Cardiac septum (tissue), 1 donor: ENCODE measurements at regions of chr16 and their contacts with region 1.

Region 1: GRCh38 chr16:27179500-27180072 is 23.7 kb upstream of the KDM8 start:
- DNase-seq: peak; percentile 91

Region 2: GRCh38 chr16:27242868-27243590 is 63.4 kb after region 1 on chr16:
- intact Hi-C with region 1: no loop called
- DNase-seq: no peak

Region 3: GRCh38 chr16:27367461-27368357 is 188.1 kb after region 1 on chr16:
- intact Hi-C with region 1: loop called (anchors 2 kb)
- DNase-seq: peak; percentile 88

Region 4: GRCh38 chr16:27455700-27456099 is 276.1 kb after region 1 on chr16:
- intact Hi-C with region 1: loop called (anchors 2 kb)
- DNase-seq: no peak